CD4-positive, alpha-beta T cell (primary cell): ENCODE measurements at regions of chr10 and their contacts with region 1.

Region 1: DNA sequence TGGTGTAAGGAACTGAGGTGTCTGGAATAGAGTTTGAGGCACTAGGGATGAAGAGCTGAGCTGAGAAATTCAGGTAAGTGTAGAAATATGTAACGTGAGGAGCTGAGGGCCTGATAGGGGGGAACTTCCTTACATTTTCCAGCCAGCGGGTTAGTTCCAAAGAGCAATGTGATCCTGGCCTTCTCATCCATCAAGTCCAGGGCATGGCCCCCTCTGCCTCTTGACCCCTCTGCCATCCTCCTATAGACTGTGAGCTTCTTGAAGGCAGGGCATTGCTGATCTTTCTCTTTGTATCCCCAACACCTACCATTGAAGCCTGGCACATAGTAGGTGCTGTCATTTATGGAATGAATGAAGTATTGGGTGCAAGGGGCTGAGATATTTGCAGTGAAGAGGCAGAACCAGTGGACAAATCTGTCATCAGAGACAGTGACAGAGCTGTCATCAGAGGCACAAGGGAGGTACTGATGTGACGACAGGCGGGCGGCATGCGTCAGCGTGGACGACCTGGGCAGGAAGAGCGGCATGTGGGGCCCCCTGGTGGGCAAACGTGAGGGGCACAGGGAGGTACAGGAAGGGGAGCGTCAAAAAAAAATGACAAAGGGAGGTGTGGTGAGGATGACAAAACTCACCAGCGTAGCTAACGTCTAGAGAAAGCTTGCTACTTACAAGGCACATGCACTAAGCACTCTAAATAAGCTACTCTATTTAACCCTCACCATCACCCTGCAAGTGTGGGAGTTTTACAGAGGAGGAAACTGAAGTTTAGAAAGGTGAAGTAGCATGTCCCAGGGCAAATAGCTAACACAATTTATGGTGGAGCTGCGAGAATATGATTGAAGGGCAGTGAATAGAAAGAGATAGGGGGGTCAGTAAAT is 5.2 kb upstream of the CAMK2G start:
- DNase-seq: peak; percentile 90 to 98 (median 94)
- ATAC-seq: peak; percentile 89
- H3K4me3 ChIP-seq: no peak overlapping the region
- H3K4me3 Mint-ChIP-seq: peak overlapping the region; percentile 15
- H3K27ac ChIP-seq: peak overlapping the region in 1 of 2 donors; percentile 33
- H3K27ac Mint-ChIP-seq: peak overlapping the region; percentile 72
- H3K4me1 ChIP-seq: peaks cover 37% of the 10 kb centered on the region
- H3K4me1 Mint-ChIP-seq: peaks cover 24% of the 10 kb centered on the region
- H3K27me3 ChIP-seq: no peaks in the 10 kb centered on the region
- H3K27me3 Mint-ChIP-seq: no peaks in the 10 kb centered on the region
- CTCF ChIP-seq: peak; percentile 92

Region 2: GRCh38 chr10:73772280-73773151 is 107.0 kb before region 1 on chr10:
- CTCF ChIA-PET with region 1: interaction called, 24 read pairs
- POLR2A ChIA-PET with region 1: interaction called, 11 read pairs
- intact Hi-C with region 1: loop called (anchors 2 to 5 kb)
- DNase-seq: peak; percentile 61 to 95 (median 76)
- ATAC-seq: peak; percentile 71
- H3K4me3 ChIP-seq: peak overlapping the region; percentile 90
- H3K4me3 Mint-ChIP-seq: peak overlapping the region; percentile 96
- H3K27ac ChIP-seq: peak overlapping the region; percentile 91 to 92
- H3K27ac Mint-ChIP-seq: peak overlapping the region; percentile 97
- H3K4me1 ChIP-seq: peaks cover 49% of the 10 kb centered on the region
- H3K4me1 Mint-ChIP-seq: peaks cover 74% of the 10 kb centered on the region
- H3K27me3 ChIP-seq: no peaks in the 10 kb centered on the region
- H3K27me3 Mint-ChIP-seq: no peaks in the 10 kb centered on the region
- CTCF ChIP-seq: no peak

Region 3: GRCh38 chr10:73848821-73849489 is 30.6 kb before region 1 on chr10:
- CTCF ChIA-PET with region 1: interaction called, 103 read pairs
- POLR2A ChIA-PET with region 1: interaction called, 21 read pairs
- intact Hi-C with region 1: loop called (anchors 1 kb)
- DNase-seq: peak; percentile 87 to 95 (median 94)
- ATAC-seq: peak; percentile 100
- H3K4me3 ChIP-seq: no peak overlapping the region
- H3K4me3 Mint-ChIP-seq: no peak overlapping the region
- H3K27ac ChIP-seq: peak overlapping the region; percentile 31 to 36
- H3K27ac Mint-ChIP-seq: peak overlapping the region; percentile 89
- H3K4me1 ChIP-seq: peaks cover 13% of the 10 kb centered on the region
- H3K4me1 Mint-ChIP-seq: peaks cover 16% of the 10 kb centered on the region
- H3K27me3 ChIP-seq: no peaks in the 10 kb centered on the region
- H3K27me3 Mint-ChIP-seq: no peaks in the 10 kb centered on the region
- CTCF ChIP-seq: peak; percentile 98

Region 4: GRCh38 chr10:73865459-73866442 is 13.8 kb before region 1 on chr10:
- CTCF ChIA-PET with region 1: interaction called, 25 read pairs
- POLR2A ChIA-PET with region 1: interaction called, 51 read pairs
- intact Hi-C with region 1: no loop called
- DNase-seq: peak in 13 of 14 experiments; percentile 17 to 83 (median 59)
- ATAC-seq: peak; percentile 87
- H3K4me3 ChIP-seq: peak overlapping the region; percentile 50
- H3K4me3 Mint-ChIP-seq: peak overlapping the region; percentile 89
- H3K27ac ChIP-seq: peak overlapping the region; percentile 70 to 76
- H3K27ac Mint-ChIP-seq: peak overlapping the region; percentile 94
- H3K4me1 ChIP-seq: peaks cover 94% of the 10 kb centered on the region
- H3K4me1 Mint-ChIP-seq: peaks cover 96% of the 10 kb centered on the region
- H3K27me3 ChIP-seq: no peaks in the 10 kb centered on the region
- H3K27me3 Mint-ChIP-seq: no peaks in the 10 kb centered on the region
- CTCF ChIP-seq: no peak

Region 5: DNA sequence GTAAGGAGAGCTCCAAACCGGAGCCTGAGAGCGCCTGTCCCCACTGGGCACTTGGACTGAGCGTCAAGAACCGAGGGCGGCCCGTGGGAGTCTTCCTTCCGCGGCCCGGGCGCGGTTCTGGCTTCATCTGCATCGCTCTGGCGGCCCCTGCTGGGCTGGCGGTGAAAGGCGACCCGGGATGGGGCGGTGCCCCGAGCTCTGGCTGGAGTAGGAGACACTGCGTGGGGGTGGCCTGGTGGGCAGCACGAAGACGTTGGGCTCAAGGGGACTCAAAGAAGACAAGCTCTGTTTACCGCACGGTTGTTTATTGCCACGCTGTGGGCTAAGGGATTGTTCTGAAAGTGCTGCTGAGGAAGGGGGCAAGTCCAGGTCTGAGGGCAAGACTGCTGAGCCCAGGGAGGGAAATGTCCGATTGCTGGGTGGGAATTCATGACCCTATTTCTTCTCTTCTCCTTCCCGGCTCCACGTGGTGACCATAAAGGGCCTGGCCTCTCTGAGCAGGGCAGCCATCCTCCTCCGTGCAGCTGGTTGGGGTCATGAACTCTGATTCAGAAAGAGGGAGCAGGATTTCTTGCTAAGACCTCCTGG is 61.2 kb after region 1 on chr10:
- CTCF ChIA-PET with region 1: interaction called, 44 read pairs
- POLR2A ChIA-PET with region 1: interaction called, 15 read pairs
- intact Hi-C with region 1: no loop called
- DNase-seq: peak; percentile 71 to 90 (median 82)
- ATAC-seq: peak; percentile 100
- H3K4me3 ChIP-seq: peak overlapping the region; percentile 3
- H3K4me3 Mint-ChIP-seq: no peak overlapping the region
- H3K27ac ChIP-seq: no peak overlapping the region
- H3K27ac Mint-ChIP-seq: no peak overlapping the region
- H3K4me1 ChIP-seq: peaks cover 9% of the 10 kb centered on the region
- H3K4me1 Mint-ChIP-seq: peaks cover 8% of the 10 kb centered on the region
- H3K27me3 ChIP-seq: no peaks in the 10 kb centered on the region
- H3K27me3 Mint-ChIP-seq: no peaks in the 10 kb centered on the region
- CTCF ChIP-seq: peak; percentile 95

Region 6: GRCh38 chr10:74234569-74234968 is 355.0 kb after region 1 on chr10:
- CTCF ChIA-PET with region 1: no interaction called
- POLR2A ChIA-PET with region 1: no interaction called
- intact Hi-C with region 1: loop called in 1 of 2 experiments (anchors 10 kb)
- DNase-seq: peak in 2 of 14 experiments; percentile 16 to 35
- ATAC-seq: no peak
- H3K4me3 ChIP-seq: no peak overlapping the region
- H3K4me3 Mint-ChIP-seq: no peak overlapping the region
- H3K27ac ChIP-seq: no peak overlapping the region
- H3K27ac Mint-ChIP-seq: no peak overlapping the region
- H3K4me1 ChIP-seq: no peaks in the 10 kb centered on the region
- H3K4me1 Mint-ChIP-seq: peaks cover 11% of the 10 kb centered on the region
- H3K27me3 ChIP-seq: no peaks in the 10 kb centered on the region
- H3K27me3 Mint-ChIP-seq: no peaks in the 10 kb centered on the region
- CTCF ChIP-seq: peak; percentile 66